HEK293T (cell line): ENCODE measurements at regions of chrX and their contacts with region 1.

Region 1: GRCh38 chrX:40792433-40792832 is 57.1 kb upstream of the MED14 start:
- DNase-seq: no peak

Region 2: DNA sequence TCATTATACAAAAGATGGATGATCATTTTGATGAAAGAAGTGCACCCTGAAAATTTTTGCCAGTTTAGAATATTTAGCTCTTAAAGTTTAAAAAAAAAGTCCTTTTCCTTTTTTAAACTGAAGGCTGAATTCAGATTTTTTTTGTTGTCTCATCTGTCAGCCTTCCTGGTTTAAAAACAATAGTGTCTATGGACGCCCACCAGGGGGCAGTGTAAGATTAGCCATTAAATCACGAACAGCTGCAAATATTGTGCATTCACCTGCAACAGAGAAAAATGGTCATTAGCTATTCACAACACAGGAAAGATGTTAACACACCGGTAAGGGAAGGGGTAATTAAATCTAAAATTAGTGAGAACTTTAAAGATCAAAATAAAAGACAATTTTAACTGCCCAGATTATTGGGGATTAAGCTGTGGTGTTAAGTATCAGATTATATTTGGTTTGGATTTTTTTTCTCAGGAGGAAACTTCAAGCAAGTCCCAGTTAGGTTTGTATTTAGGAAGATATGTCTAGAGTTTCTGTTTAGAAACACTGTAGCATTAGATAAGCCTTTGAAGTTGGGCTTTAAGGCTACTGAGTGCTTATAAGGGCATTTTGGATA is 140.7 kb before region 1 on chrX:
- CTCF ChIA-PET with region 1: interaction called, 19 read pairs
- POLR2A ChIA-PET with region 1: no interaction called
- DNase-seq: peak; percentile 39

Region 3: DNA sequence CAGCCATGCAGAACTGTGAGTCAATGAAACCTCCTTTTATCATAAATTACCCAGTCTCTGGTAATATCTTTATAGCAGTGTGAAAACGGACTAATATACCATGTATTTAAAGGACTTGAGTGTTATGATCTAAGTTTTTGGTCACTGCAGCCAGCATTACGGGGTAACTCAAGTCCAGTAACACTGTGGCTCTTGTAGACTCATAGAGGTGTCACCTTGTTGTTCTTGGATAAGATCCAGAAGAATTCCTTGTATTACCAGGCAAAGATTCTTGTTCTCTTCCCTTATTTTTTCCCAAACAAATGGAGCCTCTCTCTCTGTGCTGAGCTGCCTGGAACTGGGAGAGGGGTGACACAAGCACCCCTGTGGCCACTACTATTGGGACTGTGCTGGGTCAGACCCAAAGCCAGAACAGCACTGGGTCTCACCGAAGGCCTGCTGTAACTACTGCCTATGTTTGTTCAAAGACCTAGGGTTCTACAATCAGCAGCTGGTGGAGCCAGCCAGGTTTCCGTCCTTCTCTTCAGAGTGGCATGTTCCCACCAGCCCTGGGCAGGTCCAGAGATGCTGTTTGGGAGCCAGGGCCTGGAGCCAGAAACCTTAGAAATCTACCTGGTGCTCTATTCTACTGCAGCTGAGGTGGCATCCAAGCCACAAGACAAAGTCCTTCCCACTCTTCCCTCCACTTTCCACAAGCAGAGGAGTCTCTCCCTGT is 13.4 kb before region 1 on chrX:
- CTCF ChIA-PET with region 1: no interaction called
- POLR2A ChIA-PET with region 1: no interaction called
- DNase-seq: no peak

Region 4: DNA sequence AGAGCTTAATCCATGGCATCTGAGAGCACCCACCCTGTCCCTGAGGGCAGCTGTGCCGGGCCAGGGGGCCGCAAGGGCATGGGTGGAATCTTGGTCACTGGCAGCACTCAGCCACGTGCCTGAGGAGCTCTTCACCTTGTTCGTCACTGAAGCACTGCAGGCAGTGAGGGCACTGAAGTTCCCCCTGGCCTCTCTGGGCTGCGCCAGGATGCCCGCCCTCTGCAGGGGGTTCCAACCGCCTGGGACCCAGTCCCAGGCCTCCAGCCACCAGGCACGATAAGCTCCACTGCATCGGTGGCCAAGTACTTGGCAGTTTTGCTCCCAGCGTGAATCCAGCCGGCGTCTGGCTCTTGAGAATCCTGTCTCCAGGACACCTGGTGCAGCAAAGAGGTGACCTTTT is 39.3 kb after region 1 on chrX:
- CTCF ChIA-PET with region 1: no interaction called
- POLR2A ChIA-PET with region 1: no interaction called
- DNase-seq: no peak